A549 (cell line): ENCODE measurements at regions of chr4 and their contacts with region 1.

Region 1: GRCh38 chr4:73593631-73594241 is 26.5 kb downstream of the RASSF6 start:
- DNase-seq: peak in 1 of 2 experiments; percentile 44
- ATAC-seq: no peak
- H3K4me3 ChIP-seq: no peak overlapping the region
- H3K27ac ChIP-seq: no peak overlapping the region
- H3K4me1 ChIP-seq: peaks cover 50% of the 10 kb centered on the region
- CTCF ChIP-seq: peak; percentile 78
- EP300 ChIP-seq: no peak
- POLR2A ChIP-seq: no peak
- RAD21 ChIP-seq: peak; percentile 67 to 77

Region 2: DNA sequence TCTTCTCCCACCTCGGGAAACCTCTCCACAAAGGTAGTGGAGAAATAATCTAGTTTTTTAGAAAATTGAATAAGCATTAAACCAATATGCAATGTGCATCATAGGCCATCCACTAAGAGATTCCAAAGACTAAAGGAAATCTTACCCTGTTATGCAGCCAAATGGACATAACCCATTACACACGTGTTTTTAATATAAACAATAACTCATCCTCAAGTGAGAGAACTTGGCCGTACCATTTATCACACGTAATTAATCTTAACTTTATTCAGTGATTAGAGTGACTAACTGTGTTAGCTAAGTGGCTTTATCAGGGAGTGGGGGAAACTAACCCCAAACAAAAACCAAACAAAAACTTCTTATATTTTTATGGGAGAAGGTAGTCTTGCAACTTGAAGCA is 54.4 kb before region 1 on chr4:
- CTCF ChIA-PET with region 1: no interaction called
- POLR2A ChIA-PET with region 1: no interaction called
- DNase-seq: no peak
- ATAC-seq: no peak
- H3K4me3 ChIP-seq: no peak overlapping the region
- H3K27ac ChIP-seq: no peak overlapping the region
- H3K4me1 ChIP-seq: peaks cover 17% of the 10 kb centered on the region; the same call in 1 of the 3 replicates
- CTCF ChIP-seq: no peak
- EP300 ChIP-seq: no peak
- POLR2A ChIP-seq: no peak
- RAD21 ChIP-seq: no peak

Region 3: GRCh38 chr4:73653695-73654106 is 60.0 kb after region 1 on chr4:
- CTCF ChIA-PET with region 1: interaction called, 24 read pairs
- POLR2A ChIA-PET with region 1: no interaction called
- DNase-seq: peak; percentile 29 to 34
- ATAC-seq: peak; percentile 70 to 79; a peak in 5 of 6 replicates
- H3K4me3 ChIP-seq: no peak overlapping the region
- H3K27ac ChIP-seq: no peak overlapping the region
- H3K4me1 ChIP-seq: no peaks in the 10 kb centered on the region
- CTCF ChIP-seq: peak; percentile 67
- EP300 ChIP-seq: no peak
- POLR2A ChIP-seq: no peak
- RAD21 ChIP-seq: peak; percentile 86